ENCODE measurements at regions of chr9 and their contacts with region 1.

Region 1: DNA sequence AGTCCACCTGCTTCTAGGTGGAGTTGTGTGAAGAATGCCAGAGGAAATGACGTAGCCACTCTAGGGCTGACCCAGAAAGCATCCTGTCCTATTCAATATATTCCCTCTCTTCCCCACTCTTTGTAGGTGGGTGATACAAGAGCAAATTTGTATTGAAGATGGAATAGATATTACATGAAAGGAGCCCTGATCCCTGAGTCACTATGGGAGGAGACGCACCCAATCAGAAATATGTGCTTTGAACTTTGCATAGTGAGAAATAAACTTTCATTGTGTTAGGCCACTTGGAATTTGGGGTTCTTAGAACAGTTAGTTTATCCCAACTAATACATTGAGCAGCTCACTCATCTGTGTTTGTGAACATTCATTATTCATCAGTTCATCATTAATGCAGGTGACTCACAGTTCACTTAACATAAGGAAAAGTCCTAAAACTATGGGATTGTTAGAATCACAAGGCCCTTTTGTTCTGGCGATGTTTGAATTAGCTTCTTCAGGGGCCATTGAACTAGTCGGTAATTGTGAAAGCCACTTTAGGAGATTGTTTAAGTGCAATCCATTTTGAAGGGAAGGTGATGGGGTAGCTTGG is 26.9 kb upstream of the NTRK2 start:
- DNase-seq: no peak
- H3K4me3 Mint-ChIP-seq: no peak overlapping the region
- H3K27ac Mint-ChIP-seq: no peak overlapping the region
- H3K4me1 Mint-ChIP-seq: no peaks in the 10 kb centered on the region
- H3K27me3 Mint-ChIP-seq: no peaks in the 10 kb centered on the region

Region 2: DNA sequence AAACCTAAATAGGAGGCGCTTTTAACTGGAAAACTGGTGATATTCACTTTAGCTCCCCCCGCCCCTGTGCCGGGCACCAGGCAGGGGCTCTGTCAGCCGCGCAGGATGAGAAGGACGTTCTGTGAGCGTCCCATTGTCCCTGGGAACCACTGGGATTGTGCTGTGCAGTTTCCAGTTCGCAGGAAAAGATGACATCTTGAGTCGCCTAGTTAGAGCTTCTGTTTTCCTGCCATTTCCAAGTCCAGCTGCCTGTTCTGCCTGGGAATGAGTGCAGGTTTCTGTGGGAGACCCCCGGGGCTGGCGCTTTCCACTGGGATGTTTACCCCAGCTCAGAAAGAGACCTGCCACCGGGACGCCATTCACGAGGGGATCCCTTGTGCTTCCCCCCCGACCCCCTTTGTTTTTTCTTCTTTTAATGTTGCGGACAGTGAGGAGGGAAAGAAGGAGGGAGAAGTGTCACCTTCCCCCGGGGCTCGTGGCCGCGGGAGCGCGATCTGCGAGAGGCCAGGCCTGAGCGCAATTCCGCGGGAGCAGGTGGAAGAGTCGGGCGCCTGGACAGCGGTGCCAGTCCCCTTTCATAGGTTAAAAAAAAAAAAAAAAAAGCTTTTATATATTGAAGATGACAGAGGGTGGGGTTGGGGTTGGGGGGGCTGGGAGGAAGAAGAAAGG is 540.5 kb before region 1 on chr9:
- intact Hi-C with region 1: loop called (anchors 5 kb)
- DNase-seq: no peak
- H3K4me3 Mint-ChIP-seq: no peak overlapping the region
- H3K27ac Mint-ChIP-seq: no peak overlapping the region
- H3K4me1 Mint-ChIP-seq: peaks cover 1% of the 10 kb centered on the region
- H3K27me3 Mint-ChIP-seq: peaks cover 31% of the 10 kb centered on the region

Region 3: GRCh38 chr9:84343111-84343521 is 299.5 kb before region 1 on chr9:
- intact Hi-C with region 1: no loop called
- DNase-seq: no peak
- H3K4me3 Mint-ChIP-seq: no peak overlapping the region
- H3K27ac Mint-ChIP-seq: no peak overlapping the region
- H3K4me1 Mint-ChIP-seq: no peaks in the 10 kb centered on the region
- H3K27me3 Mint-ChIP-seq: peaks cover 12% of the 10 kb centered on the region

Region 4: DNA sequence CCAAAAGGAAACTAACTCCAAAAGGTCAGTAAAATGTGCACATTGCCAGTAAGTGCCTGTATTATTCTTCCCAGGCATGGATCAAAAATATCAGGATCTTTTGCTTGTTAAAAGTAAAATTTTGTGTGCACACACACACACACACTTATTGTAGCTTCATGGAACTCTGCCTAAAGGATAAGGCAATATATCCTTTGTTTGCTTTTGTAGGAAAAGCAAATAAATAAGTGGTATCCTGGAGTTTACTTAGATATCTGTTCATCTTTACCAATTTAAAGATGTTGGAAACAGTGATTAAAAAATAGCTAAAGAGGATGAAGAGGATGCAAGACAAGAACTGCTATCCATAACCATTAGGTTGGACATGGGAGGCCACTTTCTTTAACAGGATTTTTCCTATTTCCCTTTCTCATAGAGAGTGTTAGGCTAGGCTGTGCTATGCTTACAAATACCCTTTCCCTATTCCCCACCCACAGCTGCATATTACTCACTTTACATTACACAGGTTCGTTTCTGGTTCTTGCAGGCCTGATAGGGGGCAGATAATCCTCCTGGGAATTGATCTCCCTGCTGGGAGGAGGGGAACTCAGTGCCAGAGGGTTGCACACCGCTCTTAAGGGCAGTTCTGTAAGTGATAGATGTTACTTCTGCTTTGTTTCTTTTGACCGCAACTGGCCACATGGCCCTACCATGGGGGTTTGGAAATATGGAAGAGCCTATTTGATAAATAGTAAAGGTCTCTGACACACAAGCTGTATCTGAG is 27.3 kb before region 1 on chr9:
- intact Hi-C with region 1: no loop called
- DNase-seq: no peak
- H3K4me3 Mint-ChIP-seq: no peak overlapping the region
- H3K27ac Mint-ChIP-seq: no peak overlapping the region
- H3K4me1 Mint-ChIP-seq: no peaks in the 10 kb centered on the region
- H3K27me3 Mint-ChIP-seq: no peaks in the 10 kb centered on the region

Region 5: GRCh38 chr9:84681516-84682285 is 39.1 kb after region 1 on chr9:
- intact Hi-C with region 1: no loop called
- DNase-seq: no peak
- H3K4me3 Mint-ChIP-seq: no peak overlapping the region
- H3K27ac Mint-ChIP-seq: no peak overlapping the region
- H3K4me1 Mint-ChIP-seq: no peaks in the 10 kb centered on the region
- H3K27me3 Mint-ChIP-seq: no peaks in the 10 kb centered on the region

Measured in activated T-helper 1 cell treated with anti-CD3 and anti-CD28 coated beads, Interleukin-12 subunit alpha, Interleukin-12 subunit beta, Interleukin-2, Interleukin-4 antibody, amounts not matched to agents 30 ng/mL and 10 ng/mL and 1 ng/mL, durations not matched to agents 14 hours and 24 hours and 36 hours (primary cell).